ENCODE measurements at regions of chr7 and their contacts with region 1.

Region 1: GRCh38 chr7:111741811-111742240 is 179.5 kb upstream of the IMMP2L start:
- DNase-seq: peak in 7 of 9 donors; percentile 20 to 56 (median 47)
- ATAC-seq: peak; percentile 84
- H3K4me3 ChIP-seq: no peak overlapping the region
- H3K4me3 Mint-ChIP-seq: no peak overlapping the region
- H3K27ac ChIP-seq: no peak overlapping the region
- H3K27ac Mint-ChIP-seq: no peak overlapping the region
- H3K4me1 ChIP-seq: no peaks in the 10 kb centered on the region
- H3K4me1 Mint-ChIP-seq: no peaks in the 10 kb centered on the region
- H3K27me3 ChIP-seq: no peaks in the 10 kb centered on the region
- H3K27me3 Mint-ChIP-seq: peaks cover 0 to 11% (median 2%) of the 10 kb centered on the region in 5 donors

Region 2: DNA sequence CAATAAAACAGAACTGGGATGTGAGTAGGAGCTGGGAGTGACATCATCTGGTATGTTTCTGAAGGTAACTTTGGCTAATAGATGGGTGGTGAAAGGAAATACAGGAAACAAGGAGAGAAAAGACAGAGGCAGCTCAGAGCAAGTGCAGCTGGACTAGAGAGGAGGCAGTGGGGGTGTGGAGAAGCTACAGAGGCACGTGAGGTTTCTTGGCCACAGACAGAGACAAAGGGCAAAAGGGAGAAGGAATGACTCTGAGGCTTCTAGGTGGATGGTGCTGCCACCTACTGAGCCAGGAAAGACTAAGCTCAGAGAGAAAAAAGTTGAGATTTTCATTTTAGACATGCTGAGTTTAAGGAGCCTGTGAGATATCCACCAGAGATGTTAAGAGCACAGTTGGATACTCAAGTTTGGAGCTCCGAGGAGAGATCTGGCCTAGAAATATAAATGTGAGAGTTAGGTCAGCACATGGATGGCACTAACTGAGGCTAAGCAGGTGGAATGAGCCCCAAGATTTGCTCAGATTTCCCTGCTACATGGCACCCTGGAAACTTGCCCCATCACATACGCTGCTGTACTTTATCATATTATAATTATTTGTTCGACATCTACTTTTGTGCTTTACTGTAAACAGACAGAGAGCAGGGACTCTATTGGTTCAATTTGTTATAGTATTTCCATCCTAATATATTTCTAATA is 113.5 kb after region 1 on chr7:
- CTCF ChIA-PET with region 1: no interaction called
- POLR2A ChIA-PET with region 1: no interaction called
- intact Hi-C with region 1: loop called in 1 of 2 experiments (anchors 5 kb)
- DNase-seq: no peak
- ATAC-seq: peak; percentile 20
- H3K4me3 ChIP-seq: no peak overlapping the region
- H3K4me3 Mint-ChIP-seq: no peak overlapping the region
- H3K27ac ChIP-seq: no peak overlapping the region
- H3K27ac Mint-ChIP-seq: no peak overlapping the region
- H3K4me1 ChIP-seq: no peaks in the 10 kb centered on the region
- H3K4me1 Mint-ChIP-seq: peaks cover 0 to 5% (median 0%) of the 10 kb centered on the region in 7 donors
- H3K27me3 ChIP-seq: no peaks in the 10 kb centered on the region
- H3K27me3 Mint-ChIP-seq: peaks cover 0 to 19% (median 10%) of the 10 kb centered on the region in 5 donors

Region 3: GRCh38 chr7:112414855-112415490 is 673.1 kb after region 1 on chr7:
- CTCF ChIA-PET with region 1: no interaction called
- POLR2A ChIA-PET with region 1: no interaction called
- intact Hi-C with region 1: loop called (anchors 1 kb)
- DNase-seq: peak in 2 of 9 donors; percentile 15 to 17
- ATAC-seq: no peak
- H3K4me3 ChIP-seq: no peak overlapping the region
- H3K4me3 Mint-ChIP-seq: no peak overlapping the region
- H3K27ac ChIP-seq: no peak overlapping the region
- H3K27ac Mint-ChIP-seq: no peak overlapping the region
- H3K4me1 ChIP-seq: no peaks in the 10 kb centered on the region
- H3K4me1 Mint-ChIP-seq: peaks cover 0 to 5% (median 4%) of the 10 kb centered on the region in 7 donors
- H3K27me3 ChIP-seq: no peaks in the 10 kb centered on the region
- H3K27me3 Mint-ChIP-seq: peaks cover 4 to 29% (median 8%) of the 10 kb centered on the region in 5 donors

Region 4: GRCh38 chr7:112495810-112496462 is 754.1 kb after region 1 on chr7:
- CTCF ChIA-PET with region 1: interaction called, 6 read pairs
- POLR2A ChIA-PET with region 1: no interaction called
- intact Hi-C with region 1: loop called (anchors 1 kb)
- DNase-seq: peak in 6 of 9 donors; percentile 2 to 28 (median 18)
- ATAC-seq: no peak
- H3K4me3 ChIP-seq: no peak overlapping the region
- H3K4me3 Mint-ChIP-seq: no peak overlapping the region
- H3K27ac ChIP-seq: no peak overlapping the region
- H3K27ac Mint-ChIP-seq: no peak overlapping the region
- H3K4me1 ChIP-seq: no peaks in the 10 kb centered on the region
- H3K4me1 Mint-ChIP-seq: no peaks in the 10 kb centered on the region
- H3K27me3 ChIP-seq: no peaks in the 10 kb centered on the region
- H3K27me3 Mint-ChIP-seq: peaks cover 4 to 24% (median 5%) of the 10 kb centered on the region in 5 donors

Region 5: DNA sequence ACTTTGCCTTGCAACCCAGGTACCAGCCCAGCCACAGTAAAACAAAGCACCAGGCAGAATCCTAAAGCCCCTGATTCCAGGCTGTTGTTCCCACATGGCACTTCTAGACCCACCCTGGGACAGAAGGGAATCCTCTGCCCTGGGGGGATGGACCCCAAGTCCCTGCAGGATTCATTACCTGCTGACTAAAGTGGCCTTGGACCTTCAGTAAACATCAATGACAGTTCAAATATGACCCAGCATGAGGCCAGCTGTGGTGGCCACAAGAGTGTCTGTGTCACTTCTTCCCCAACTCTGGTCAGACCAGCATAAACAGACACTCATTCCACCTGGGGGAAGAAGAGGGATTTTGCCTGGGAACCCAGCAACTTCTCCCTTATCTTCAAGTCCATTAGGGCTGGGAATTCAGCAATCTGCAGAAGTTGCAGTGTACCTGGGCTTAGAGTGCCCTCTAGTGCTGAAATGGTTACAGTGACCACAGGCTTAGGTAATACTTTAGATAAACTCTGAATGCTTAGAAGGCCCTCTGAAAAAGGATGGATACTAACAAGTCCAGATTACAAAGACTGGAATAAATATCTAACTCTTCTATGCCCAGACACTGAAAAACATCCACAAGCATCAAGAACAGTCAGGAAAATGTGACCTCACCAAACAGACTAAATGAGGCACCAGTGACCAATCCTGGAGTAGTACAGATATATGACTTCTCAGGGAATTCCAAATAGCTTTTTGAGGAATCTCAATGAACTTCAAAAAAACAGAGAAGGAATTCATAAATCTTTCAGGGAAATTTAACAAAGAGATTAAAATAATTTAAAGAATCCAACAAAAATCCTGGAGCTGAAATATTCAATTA is 1156.8 kb after region 1 on chr7:
- CTCF ChIA-PET with region 1: no interaction called
- POLR2A ChIA-PET with region 1: no interaction called
- intact Hi-C with region 1: loop called in 1 of 2 experiments (anchors 1 kb)
- DNase-seq: peak in 7 of 9 donors; percentile 4 to 30 (median 23)
- ATAC-seq: peak; percentile 81
- H3K4me3 ChIP-seq: no peak overlapping the region
- H3K4me3 Mint-ChIP-seq: no peak overlapping the region
- H3K27ac ChIP-seq: no peak overlapping the region
- H3K27ac Mint-ChIP-seq: peak overlapping the region in 1 of 9 donors; percentile 51
- H3K4me1 ChIP-seq: no peaks in the 10 kb centered on the region
- H3K4me1 Mint-ChIP-seq: peaks cover 0 to 26% (median 14%) of the 10 kb centered on the region in 7 donors
- H3K27me3 ChIP-seq: no peaks in the 10 kb centered on the region
- H3K27me3 Mint-ChIP-seq: no peaks in the 10 kb centered on the region

Region 6: DNA sequence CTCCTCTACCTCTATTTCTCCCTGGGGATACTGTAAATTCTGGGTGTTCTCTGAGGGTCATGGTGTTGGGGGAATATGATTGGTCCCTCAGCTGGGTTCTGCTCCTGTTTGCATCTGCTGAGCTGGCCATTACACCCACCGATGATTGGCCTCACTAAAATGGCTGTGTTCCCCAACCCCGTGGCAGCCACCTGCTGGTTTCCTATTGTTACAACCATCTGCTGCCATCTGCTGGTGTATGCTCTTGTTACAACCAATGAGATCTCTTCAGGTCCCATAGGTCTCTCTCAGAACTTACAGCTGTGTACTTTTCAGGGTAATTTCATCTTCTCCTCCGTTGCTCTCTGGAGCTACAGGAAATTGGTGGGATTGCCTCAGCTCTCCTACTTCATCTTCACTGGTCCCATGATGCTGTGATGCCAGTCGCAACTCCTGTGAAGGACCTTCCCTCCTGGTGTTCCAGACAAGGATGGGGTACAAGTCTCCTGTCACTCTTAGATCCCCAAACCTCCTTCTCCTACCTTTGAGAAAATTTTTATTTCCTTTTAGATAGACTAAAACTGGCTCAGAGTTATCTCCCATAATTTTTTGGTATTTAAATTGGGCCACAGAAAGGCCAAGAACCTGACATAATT is 1680.0 kb after region 1 on chr7:
- CTCF ChIA-PET with region 1: interaction called, 4 read pairs
- POLR2A ChIA-PET with region 1: no interaction called
- intact Hi-C with region 1: loop called (anchors 1 kb)
- DNase-seq: peak; percentile 26 to 73 (median 64)
- ATAC-seq: peak; percentile 95
- H3K4me3 ChIP-seq: no peak overlapping the region
- H3K4me3 Mint-ChIP-seq: peak overlapping the region in 7 of 10 donors; percentile 33 to 65 (median 52)
- H3K27ac ChIP-seq: no peak overlapping the region
- H3K27ac Mint-ChIP-seq: peak overlapping the region in 1 of 9 donors; percentile 72
- H3K4me1 ChIP-seq: no peaks in the 10 kb centered on the region
- H3K4me1 Mint-ChIP-seq: peaks cover 3 to 5% (median 4%) of the 10 kb centered on the region in 7 donors
- H3K27me3 ChIP-seq: no peaks in the 10 kb centered on the region
- H3K27me3 Mint-ChIP-seq: peaks cover 0 to 7% (median 3%) of the 10 kb centered on the region in 5 donors

Region 7: DNA sequence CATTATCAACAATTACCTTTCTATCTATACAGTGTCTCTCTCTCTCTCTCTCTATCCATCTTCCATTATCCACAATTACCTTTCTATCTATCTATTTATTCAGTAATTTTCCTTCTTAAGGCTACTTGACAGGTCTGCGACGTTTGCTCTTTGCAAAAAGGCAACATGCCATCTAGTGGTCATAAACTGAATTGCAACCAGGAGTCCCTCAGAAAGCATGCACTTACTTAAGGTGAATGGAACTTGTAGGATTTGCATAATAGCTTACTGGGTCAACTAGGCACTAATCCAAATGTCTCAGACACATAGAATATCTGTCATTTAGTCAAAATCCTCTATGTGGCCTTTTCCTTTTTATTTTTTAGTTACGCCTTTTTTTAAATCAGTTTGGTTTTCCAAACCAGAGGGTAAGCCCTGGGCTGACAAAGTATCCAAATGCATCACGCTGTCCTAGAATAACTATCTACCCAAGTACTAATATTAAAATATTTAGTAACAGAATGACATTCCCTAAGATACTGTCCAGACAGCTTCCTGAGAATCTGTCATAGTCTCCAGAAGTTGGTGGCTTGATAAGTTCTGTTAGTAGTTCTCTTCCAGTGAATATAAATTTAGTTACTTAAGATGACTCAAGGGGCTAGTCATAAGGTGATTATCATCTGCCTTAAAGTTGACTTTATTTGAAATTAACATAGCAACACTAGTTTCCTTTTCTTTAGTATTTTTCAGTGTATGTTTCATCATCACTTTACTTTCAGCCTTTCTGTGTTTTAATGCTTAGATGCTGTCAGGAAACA is 1968.7 kb after region 1 on chr7:
- CTCF ChIA-PET with region 1: no interaction called
- POLR2A ChIA-PET with region 1: no interaction called
- intact Hi-C with region 1: loop called in 1 of 2 experiments (anchors 1 kb)
- DNase-seq: peak in 7 of 9 donors; percentile 8 to 56 (median 42)
- ATAC-seq: peak; percentile 61
- H3K4me3 ChIP-seq: no peak overlapping the region
- H3K4me3 Mint-ChIP-seq: no peak overlapping the region
- H3K27ac ChIP-seq: no peak overlapping the region
- H3K27ac Mint-ChIP-seq: no peak overlapping the region
- H3K4me1 ChIP-seq: no peaks in the 10 kb centered on the region
- H3K4me1 Mint-ChIP-seq: peaks cover 0 to 1% (median 0%) of the 10 kb centered on the region in 7 donors
- H3K27me3 ChIP-seq: no peaks in the 10 kb centered on the region
- H3K27me3 Mint-ChIP-seq: peaks cover 0 to 14% (median 0%) of the 10 kb centered on the region in 5 donors